Panc1 (cell line): ENCODE measurements at regions of chr10 and their contacts with region 1.

Region 1: GRCh38 chr10:74826142-74827044 is at the start of gene KAT6B:
- DNase-seq: peak; percentile 100
- ATAC-seq: peak; percentile 93
- H3K4me3 ChIP-seq: peak within 1 kb of the TSS; percentile 92 to 93
- H3K27ac ChIP-seq: peak within 1 kb of the TSS; percentile 87
- H3K4me1 ChIP-seq: peaks cover 41% of the 10 kb centered on the region
- H3K27me3 ChIP-seq: no peaks in the 10 kb centered on the region
- CTCF ChIP-seq: no peak; the same call in 1 of the 2 replicates
- total RNA-seq, gene KAT6B: 31.1 TPM

Region 2: GRCh38 chr10:74262856-74263255 is 563.5 kb before region 1 on chr10:
- CTCF ChIA-PET with region 1: no interaction called
- POLR2A ChIA-PET with region 1: no interaction called
- in situ Hi-C with region 1: no loop called
- intact Hi-C with region 1: loop called (anchors 10 kb)
- DNase-seq: no peak
- ATAC-seq: no peak
- H3K4me3 ChIP-seq: no peak overlapping the region
- H3K27ac ChIP-seq: no peak overlapping the region
- H3K4me1 ChIP-seq: no peaks in the 10 kb centered on the region; the same call in 1 of the 2 replicates
- H3K27me3 ChIP-seq: no peaks in the 10 kb centered on the region
- CTCF ChIP-seq: no peak

Region 3: GRCh38 chr10:75083972-75084833 is 257.8 kb after region 1 on chr10:
- CTCF ChIA-PET with region 1: no interaction called
- POLR2A ChIA-PET with region 1: no interaction called
- in situ Hi-C with region 1: no loop called
- intact Hi-C with region 1: loop called (anchors 10 kb)
- DNase-seq: no peak
- ATAC-seq: no peak
- H3K4me3 ChIP-seq: no peak overlapping the region
- H3K27ac ChIP-seq: no peak overlapping the region
- H3K4me1 ChIP-seq: peaks cover 4% of the 10 kb centered on the region; the same call in 1 of the 2 replicates
- H3K27me3 ChIP-seq: no peaks in the 10 kb centered on the region
- CTCF ChIP-seq: no peak